ENCODE measurements at regions of chr15 and their contacts with region 1.

Region 1: GRCh38 chr15:65286704-65287519 is at the start of gene PARP16:
- DNase-seq: peak; percentile 95
- ATAC-seq: peak; percentile 97
- H3K4me3 Mint-ChIP-seq: peak within 1 kb of the TSS; percentile 76
- H3K27ac Mint-ChIP-seq: peak within 1 kb of the TSS; percentile 83
- H3K4me1 Mint-ChIP-seq: peaks cover 17% of the 10 kb centered on the region
- H3K27me3 Mint-ChIP-seq: peaks cover 36% of the 10 kb centered on the region
- CTCF ChIP-seq: no peak
- total RNA-seq, gene PARP16: 4.7 to 6.2 TPM (median 5.8 TPM) in 3 replicates

Region 2: GRCh38 chr15:64950888-64951287 is 336.0 kb before region 1 on chr15:
- CTCF ChIA-PET with region 1: no interaction called
- POLR2A ChIA-PET with region 1: no interaction called
- DNase-seq: no peak
- ATAC-seq: no peak
- H3K4me3 Mint-ChIP-seq: no peak overlapping the region
- H3K27ac Mint-ChIP-seq: peak overlapping the region; percentile 25; the same call in 1 of the 2 replicates
- H3K4me1 Mint-ChIP-seq: 0 out of 2 replicates have a peak, but pooled peaks cover 4% of the 10 kb centered on the region
- H3K27me3 Mint-ChIP-seq: peaks cover 14% of the 10 kb centered on the region
- CTCF ChIP-seq: no peak

Region 3: GRCh38 chr15:65089206-65089824 is 197.6 kb before region 1 on chr15:
- CTCF ChIA-PET with region 1: no interaction called
- POLR2A ChIA-PET with region 1: no interaction called
- DNase-seq: no peak
- ATAC-seq: no peak
- H3K4me3 Mint-ChIP-seq: no peak overlapping the region
- H3K27ac Mint-ChIP-seq: no peak overlapping the region
- H3K4me1 Mint-ChIP-seq: peaks cover 42% of the 10 kb centered on the region
- H3K27me3 Mint-ChIP-seq: peaks cover 9% of the 10 kb centered on the region
- CTCF ChIP-seq: no peak

Region 4: DNA sequence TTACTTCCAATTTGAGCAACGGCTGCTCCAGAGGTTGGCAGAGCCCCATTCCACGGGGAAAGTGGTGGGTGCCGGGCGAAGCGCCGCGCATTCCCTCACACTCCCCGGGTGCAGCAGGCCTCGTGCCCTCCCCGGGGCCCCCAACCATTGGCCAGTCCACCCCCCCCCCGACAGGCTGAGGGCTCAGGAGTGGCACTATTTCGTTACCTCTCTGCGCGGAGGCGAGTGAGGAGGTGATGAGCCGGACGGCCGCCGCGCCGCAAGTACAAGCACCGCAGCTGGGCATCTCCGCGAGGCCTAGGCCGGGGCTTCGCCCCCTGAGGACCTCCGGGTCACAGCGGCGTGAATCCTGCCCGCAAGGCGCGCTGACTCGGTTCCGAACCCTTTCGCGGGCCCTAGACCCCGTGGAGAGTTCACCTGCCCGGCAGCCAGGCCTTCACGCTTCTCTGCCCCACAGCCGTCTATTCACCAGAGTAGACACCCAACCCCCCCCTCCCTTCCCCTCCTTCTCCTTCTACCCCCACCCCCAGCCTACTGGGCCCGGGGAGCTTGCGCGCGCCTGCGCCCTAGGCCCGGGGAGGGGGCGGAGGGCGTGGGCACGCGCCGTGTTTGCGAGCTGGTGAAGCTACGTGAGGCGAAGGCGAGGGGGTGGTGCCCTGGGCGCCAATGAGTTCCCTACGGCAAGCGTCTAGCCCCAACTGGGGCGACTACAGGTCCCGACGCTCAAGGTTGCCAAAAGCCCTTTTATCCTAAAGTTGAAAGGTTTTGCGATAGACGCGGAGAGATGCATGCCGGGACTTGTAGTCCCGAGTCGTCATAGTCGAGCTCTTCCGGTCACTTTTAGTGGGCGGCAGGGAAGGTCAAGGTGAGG is 101.8 kb before region 1 on chr15 and contains the start of gene CLPX:
- CTCF ChIA-PET with region 1: interaction called, 18 read pairs
- POLR2A ChIA-PET with region 1: interaction called, 13 read pairs
- DNase-seq: peak; percentile 86
- ATAC-seq: peak; percentile 88
- H3K4me3 Mint-ChIP-seq: peak within 1 kb of the TSS; percentile 96
- H3K27ac Mint-ChIP-seq: peak within 1 kb of the TSS; percentile 95
- H3K4me1 Mint-ChIP-seq: peaks cover 17% of the 10 kb centered on the region
- H3K27me3 Mint-ChIP-seq: no peaks in the 10 kb centered on the region
- CTCF ChIP-seq: no peak
- total RNA-seq, gene CLPX: 57.9 to 68.7 TPM (median 61.5 TPM) in 3 replicates

Region 5: GRCh38 chr15:65264863-65265430 is 22.0 kb before region 1 on chr15:
- CTCF ChIA-PET with region 1: interaction called, 17 read pairs
- POLR2A ChIA-PET with region 1: no interaction called
- DNase-seq: no peak
- ATAC-seq: peak; percentile 84
- H3K4me3 Mint-ChIP-seq: no peak overlapping the region
- H3K27ac Mint-ChIP-seq: peak overlapping the region; percentile 65
- H3K4me1 Mint-ChIP-seq: peaks cover 25% of the 10 kb centered on the region
- H3K27me3 Mint-ChIP-seq: no peaks in the 10 kb centered on the region
- CTCF ChIP-seq: no peak

Region 6: GRCh38 chr15:65275728-65276126 is 11.2 kb before region 1 on chr15:
- CTCF ChIA-PET with region 1: interaction called, 21 read pairs
- POLR2A ChIA-PET with region 1: no interaction called
- DNase-seq: no peak
- ATAC-seq: no peak
- H3K4me3 Mint-ChIP-seq: no peak overlapping the region
- H3K27ac Mint-ChIP-seq: no peak overlapping the region; the same call in 1 of the 2 replicates
- H3K4me1 Mint-ChIP-seq: peaks cover 7% of the 10 kb centered on the region; the same call in 1 of the 2 replicates
- H3K27me3 Mint-ChIP-seq: no peaks in the 10 kb centered on the region
- CTCF ChIP-seq: no peak

Region 7: DNA sequence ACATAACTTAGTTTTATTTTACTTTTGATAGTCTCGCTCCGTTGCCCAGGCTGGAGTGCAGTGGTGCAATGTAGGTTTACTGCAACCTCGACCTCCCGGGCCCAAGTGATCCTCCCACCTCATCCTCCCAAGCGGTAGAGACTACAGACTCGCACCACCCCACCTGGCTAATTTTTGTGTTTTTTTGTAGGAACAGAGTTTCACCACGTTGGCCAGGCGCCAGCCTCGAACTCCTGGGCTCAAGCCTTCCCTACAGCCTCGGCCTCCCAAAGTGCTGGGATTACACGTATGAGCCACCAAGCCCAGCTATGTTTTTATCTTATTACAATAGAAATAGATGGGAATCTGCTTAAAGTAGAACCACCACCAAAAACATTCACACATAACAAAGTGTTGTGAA is 11.8 kb after region 1 on chr15:
- CTCF ChIA-PET with region 1: interaction called, 21 read pairs
- POLR2A ChIA-PET with region 1: interaction called, 16 read pairs
- DNase-seq: no peak
- ATAC-seq: no peak
- H3K4me3 Mint-ChIP-seq: no peak overlapping the region
- H3K27ac Mint-ChIP-seq: no peak overlapping the region
- H3K4me1 Mint-ChIP-seq: peaks cover 24% of the 10 kb centered on the region
- H3K27me3 Mint-ChIP-seq: no peaks in the 10 kb centered on the region
- CTCF ChIP-seq: no peak

Region 8: GRCh38 chr15:65304389-65305144 is 17.7 kb after region 1 on chr15 and contains the start of gene RNU5B-1:
- CTCF ChIA-PET with region 1: interaction called, 6 read pairs
- POLR2A ChIA-PET with region 1: interaction called, 16 read pairs
- DNase-seq: peak; percentile 64
- ATAC-seq: peak; percentile 75
- H3K4me3 Mint-ChIP-seq: peak within 1 kb of the TSS; percentile 81
- H3K27ac Mint-ChIP-seq: peak within 1 kb of the TSS; percentile 99
- H3K4me1 Mint-ChIP-seq: peaks cover 24% of the 10 kb centered on the region
- H3K27me3 Mint-ChIP-seq: no peaks in the 10 kb centered on the region
- CTCF ChIP-seq: no peak
- total RNA-seq, gene RNU5B-1: 9.7 to 10.4 TPM in 2 of 3 replicates, not detected in the other